ENCODE measurements at regions of chr6 and their contacts with region 1.

Region 1: GRCh38 chr6:83057705-83058321 is 7.8 kb downstream of the UBE3D start:
- DNase-seq: peak; percentile 38
- H3K4me3 Mint-ChIP-seq: no peak overlapping the region
- H3K27ac Mint-ChIP-seq: no peak overlapping the region
- H3K4me1 Mint-ChIP-seq: peaks cover 2% of the 10 kb centered on the region
- H3K27me3 Mint-ChIP-seq: no peaks in the 10 kb centered on the region

Region 2: GRCh38 chr6:82270881-82271645 is 786.8 kb before region 1 on chr6:
- CTCF ChIA-PET with region 1: interaction called, 92 read pairs
- DNase-seq: no peak
- H3K4me3 Mint-ChIP-seq: no peak overlapping the region
- H3K27ac Mint-ChIP-seq: no peak overlapping the region
- H3K4me1 Mint-ChIP-seq: no peaks in the 10 kb centered on the region
- H3K27me3 Mint-ChIP-seq: no peaks in the 10 kb centered on the region

Region 3: DNA sequence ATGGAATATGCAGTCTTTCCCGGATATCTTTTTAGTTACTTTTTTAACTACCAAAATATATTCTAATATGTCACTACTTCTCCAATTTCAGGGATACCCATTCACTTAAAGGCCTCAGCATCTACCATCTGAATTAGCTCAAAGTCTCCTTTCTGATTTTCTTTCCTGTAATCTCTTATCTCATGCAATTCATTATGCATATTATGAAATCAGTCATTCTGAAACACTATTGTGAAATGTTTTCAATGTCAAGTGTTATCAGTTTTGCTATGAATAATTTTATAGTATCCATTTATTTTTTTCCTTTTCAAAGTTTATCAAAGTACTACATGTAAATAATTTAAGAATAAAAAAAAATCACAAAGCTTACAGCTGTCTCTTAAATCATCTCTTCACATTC is 735.4 kb before region 1 on chr6:
- CTCF ChIA-PET with region 1: no interaction called
- DNase-seq: no peak
- H3K4me3 Mint-ChIP-seq: no peak overlapping the region
- H3K27ac Mint-ChIP-seq: no peak overlapping the region
- H3K4me1 Mint-ChIP-seq: no peaks in the 10 kb centered on the region
- H3K27me3 Mint-ChIP-seq: no peaks in the 10 kb centered on the region

Region 4: DNA sequence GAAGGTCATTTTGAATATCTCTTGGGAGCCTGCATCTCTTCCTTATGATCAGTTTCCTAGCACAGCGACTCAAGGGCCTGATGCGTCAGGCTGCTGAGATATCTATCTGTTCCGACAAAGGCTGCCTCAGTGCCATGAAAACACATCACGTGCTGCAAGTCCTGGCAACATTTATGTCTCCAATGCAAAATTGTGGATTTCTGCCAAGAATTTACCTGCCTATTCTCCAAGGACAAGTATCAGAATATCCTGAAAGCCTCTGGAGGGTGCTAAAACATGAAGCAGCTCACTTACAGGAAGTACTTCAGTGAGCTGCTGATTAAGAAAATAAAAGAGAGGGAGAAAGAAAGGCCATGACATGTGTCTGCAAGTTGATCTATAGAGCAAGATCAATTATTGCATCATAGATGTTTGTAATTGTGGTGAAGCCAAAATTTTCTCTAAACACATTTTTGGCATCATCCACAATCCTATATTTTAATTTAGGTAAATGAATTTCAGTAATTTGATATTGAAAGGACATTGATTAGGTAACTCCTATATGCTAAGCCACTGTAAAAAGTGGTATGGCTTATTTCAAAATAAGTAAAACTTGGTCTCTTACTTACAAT is 720.1 kb before region 1 on chr6:
- CTCF ChIA-PET with region 1: no interaction called
- DNase-seq: no peak
- H3K4me3 Mint-ChIP-seq: no peak overlapping the region
- H3K27ac Mint-ChIP-seq: no peak overlapping the region
- H3K4me1 Mint-ChIP-seq: no peaks in the 10 kb centered on the region
- H3K27me3 Mint-ChIP-seq: no peaks in the 10 kb centered on the region

Measured in activated naive CD4-positive, alpha-beta T cell treated with anti-CD3 and anti-CD28 coated beads, Interleukin-2, amount 10 ng/mL, durations not matched to agents 7 days and 5 days (primary cell).